Activated CD8-positive, alpha-beta T cell treated with anti-CD3 and anti-CD28 coated beads, Interleukin-2, amount 10 ng/mL, durations not matched to agents 7 days and 5 days (primary cell): ENCODE measurements at regions of chr3 and their contacts with region 1.

Region 1: DNA sequence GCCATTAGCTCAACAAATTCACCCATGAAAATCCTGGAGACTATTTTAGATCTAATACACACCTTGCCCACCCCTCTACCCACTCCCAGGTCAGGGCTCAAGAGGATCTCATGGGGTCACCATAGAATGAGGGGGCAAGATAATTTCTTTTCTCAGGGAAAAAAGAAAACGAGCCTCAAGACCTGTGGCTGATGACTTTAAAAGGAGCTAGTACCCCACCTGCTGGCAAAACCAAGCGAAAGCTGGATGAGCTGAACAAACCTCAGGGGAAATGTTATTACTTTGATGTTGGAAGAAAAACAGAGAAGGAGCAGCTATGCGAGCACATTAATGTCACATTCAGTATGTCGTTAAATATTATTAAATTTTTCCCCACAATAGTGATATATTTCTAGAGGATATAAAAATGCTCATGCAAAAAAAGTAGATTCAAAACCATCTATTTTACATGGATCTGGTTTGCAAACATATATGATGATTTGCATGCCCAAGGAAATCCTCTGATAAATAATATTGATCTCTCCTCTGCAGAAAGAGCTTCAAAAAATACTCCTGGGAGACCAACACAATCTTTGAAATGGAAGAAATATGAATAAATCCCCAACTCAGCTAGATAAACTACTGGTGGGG is 37.7 kb downstream of the PLD1 start:
- DNase-seq: peak; percentile 57
- ATAC-seq: no peak
- H3K4me3 Mint-ChIP-seq: no peak overlapping the region
- H3K27ac Mint-ChIP-seq: no peak overlapping the region
- H3K4me1 Mint-ChIP-seq: no peaks in the 10 kb centered on the region
- H3K27me3 Mint-ChIP-seq: peaks cover 20% of the 10 kb centered on the region

Region 2: GRCh38 chr3:171049861-171050444 is 722.6 kb before region 1 on chr3:
- CTCF ChIA-PET with region 1: interaction called, 23 read pairs
- POLR2A ChIA-PET with region 1: no interaction called
- DNase-seq: peak; percentile 64
- ATAC-seq: peak; percentile 83
- H3K4me3 Mint-ChIP-seq: no peak overlapping the region
- H3K27ac Mint-ChIP-seq: no peak overlapping the region
- H3K4me1 Mint-ChIP-seq: no peaks in the 10 kb centered on the region
- H3K27me3 Mint-ChIP-seq: peaks cover 15% of the 10 kb centered on the region

Region 3: GRCh38 chr3:171646357-171647133 is 126.0 kb before region 1 on chr3:
- CTCF ChIA-PET with region 1: interaction called, 28 read pairs
- POLR2A ChIA-PET with region 1: no interaction called
- DNase-seq: no peak
- ATAC-seq: no peak
- H3K4me3 Mint-ChIP-seq: no peak overlapping the region
- H3K27ac Mint-ChIP-seq: no peak overlapping the region
- H3K4me1 Mint-ChIP-seq: peaks cover 2% of the 10 kb centered on the region
- H3K27me3 Mint-ChIP-seq: peaks cover 8% of the 10 kb centered on the region

Region 4: GRCh38 chr3:171788546-171789351 is 16.2 kb after region 1 on chr3:
- CTCF ChIA-PET with region 1: interaction called, 14 read pairs
- POLR2A ChIA-PET with region 1: interaction called, 3 read pairs
- DNase-seq: no peak
- ATAC-seq: no peak
- H3K4me3 Mint-ChIP-seq: no peak overlapping the region
- H3K27ac Mint-ChIP-seq: no peak overlapping the region
- H3K4me1 Mint-ChIP-seq: no peaks in the 10 kb centered on the region
- H3K27me3 Mint-ChIP-seq: peaks cover 14% of the 10 kb centered on the region

Region 5: DNA sequence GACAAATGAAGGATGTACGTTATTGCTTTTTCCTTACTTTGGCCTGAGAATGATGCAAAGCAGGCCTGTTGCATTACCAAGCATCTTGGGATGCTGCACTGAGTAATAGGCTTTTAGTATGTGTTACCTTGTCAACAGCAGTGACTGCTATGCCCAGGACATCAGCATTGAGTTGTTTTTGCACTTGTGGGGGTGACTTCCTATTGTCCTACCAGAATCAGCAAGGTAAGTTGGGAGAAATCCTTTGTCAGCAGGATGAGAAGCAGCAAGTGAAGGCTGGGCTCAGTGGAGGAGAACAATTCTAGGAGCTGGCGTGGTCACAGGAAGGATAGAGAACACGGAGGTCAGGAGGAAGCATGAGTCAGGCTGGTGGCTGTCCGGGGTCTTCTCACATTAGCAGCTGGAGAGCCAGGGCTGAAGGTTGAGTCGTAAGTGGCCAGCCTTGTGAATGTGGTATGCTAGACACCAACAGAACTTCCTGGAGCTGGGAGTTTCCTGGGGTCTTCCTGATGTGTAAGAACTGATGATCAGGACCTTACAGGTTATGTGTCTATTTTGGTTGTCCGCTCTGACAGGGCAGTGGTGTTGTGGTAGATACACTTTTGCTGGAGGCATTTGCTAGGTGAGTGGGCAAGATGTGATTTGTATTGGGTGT is 409.5 kb after region 1 on chr3:
- CTCF ChIA-PET with region 1: no interaction called
- POLR2A ChIA-PET with region 1: no interaction called
- DNase-seq: no peak
- ATAC-seq: no peak
- H3K4me3 Mint-ChIP-seq: no peak overlapping the region
- H3K27ac Mint-ChIP-seq: peak overlapping the region; percentile 8
- H3K4me1 Mint-ChIP-seq: peaks cover 4% of the 10 kb centered on the region
- H3K27me3 Mint-ChIP-seq: no peaks in the 10 kb centered on the region

Region 6: GRCh38 chr3:172341482-172342059 is 569.0 kb after region 1 on chr3:
- CTCF ChIA-PET with region 1: interaction called, 18 read pairs
- POLR2A ChIA-PET with region 1: no interaction called
- DNase-seq: peak; percentile 38
- ATAC-seq: peak; percentile 81
- H3K4me3 Mint-ChIP-seq: no peak overlapping the region
- H3K27ac Mint-ChIP-seq: no peak overlapping the region
- H3K4me1 Mint-ChIP-seq: no peaks in the 10 kb centered on the region
- H3K27me3 Mint-ChIP-seq: no peaks in the 10 kb centered on the region